ENCODE measurements at regions of chr1 and their contacts with region 1.

Region 1: GRCh38 chr1:32521165-32521564 is 18.1 kb upstream of the ZBTB8A start:
- DNase-seq: no peak
- H3K4me3 Mint-ChIP-seq: peak overlapping the region; percentile 61
- H3K27ac Mint-ChIP-seq: no peak overlapping the region
- H3K4me1 Mint-ChIP-seq: peaks cover 9% of the 10 kb centered on the region
- H3K27me3 Mint-ChIP-seq: no peaks in the 10 kb centered on the region

Region 2: GRCh38 chr1:31605908-31606427 is 915.2 kb before region 1 on chr1:
- intact Hi-C with region 1: no loop called
- DNase-seq: no peak
- H3K4me3 Mint-ChIP-seq: no peak overlapping the region
- H3K27ac Mint-ChIP-seq: no peak overlapping the region
- H3K4me1 Mint-ChIP-seq: peaks cover 9% of the 10 kb centered on the region
- H3K27me3 Mint-ChIP-seq: peaks cover 21% of the 10 kb centered on the region

Region 3: DNA sequence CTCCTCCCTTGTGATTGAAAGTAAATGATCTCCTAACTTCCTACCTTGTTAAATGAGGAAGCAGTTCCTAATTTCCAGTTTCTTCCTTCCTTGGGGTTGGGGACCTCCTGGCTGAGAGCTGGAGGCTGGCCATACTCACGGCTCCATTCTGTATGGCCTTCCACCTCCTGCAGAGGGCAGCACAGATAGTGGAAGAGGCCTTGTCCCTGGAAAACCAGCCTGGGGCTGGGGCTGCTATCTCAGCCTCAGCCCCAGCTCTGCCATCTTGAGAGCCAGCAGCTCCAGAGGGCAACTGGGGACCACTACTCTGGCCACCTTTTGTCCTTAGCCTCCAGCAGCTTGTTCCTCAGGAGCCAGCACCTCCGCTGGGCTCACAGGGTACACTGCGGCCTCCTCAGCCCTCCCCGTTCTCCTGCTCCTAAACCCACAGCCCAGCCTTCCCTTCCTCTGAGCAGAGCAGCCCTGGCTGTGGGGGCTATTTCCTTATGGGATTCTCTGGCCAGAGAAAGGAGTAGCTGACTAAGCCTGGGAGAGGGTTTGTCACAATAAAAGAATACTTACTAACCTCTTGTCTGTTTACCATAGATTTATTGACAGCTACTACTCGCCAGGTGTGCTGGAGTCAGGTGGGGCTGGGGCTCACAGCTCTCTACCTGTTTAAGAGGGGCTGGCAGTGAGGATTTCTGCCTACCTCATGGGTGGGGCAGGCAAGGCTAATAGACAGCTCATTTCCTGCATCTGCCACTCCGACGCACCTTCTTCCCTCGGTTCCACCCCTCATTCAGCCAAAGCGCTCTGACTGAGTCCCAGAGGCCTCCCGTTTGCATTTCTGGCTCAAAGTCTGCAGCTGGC is 305.3 kb before region 1 on chr1:
- intact Hi-C with region 1: no loop called
- DNase-seq: peak; percentile 53
- H3K4me3 Mint-ChIP-seq: no peak overlapping the region
- H3K27ac Mint-ChIP-seq: peak overlapping the region; percentile 28
- H3K4me1 Mint-ChIP-seq: peaks cover 13% of the 10 kb centered on the region
- H3K27me3 Mint-ChIP-seq: no peaks in the 10 kb centered on the region

Region 4: GRCh38 chr1:32612189-32612881 is 91.2 kb after region 1 on chr1:
- intact Hi-C with region 1: loop called (anchors 10 kb)
- DNase-seq: peak; percentile 40
- H3K4me3 Mint-ChIP-seq: peak overlapping the region; percentile 67
- H3K27ac Mint-ChIP-seq: no peak overlapping the region
- H3K4me1 Mint-ChIP-seq: peaks cover 2% of the 10 kb centered on the region
- H3K27me3 Mint-ChIP-seq: no peaks in the 10 kb centered on the region

Region 5: DNA sequence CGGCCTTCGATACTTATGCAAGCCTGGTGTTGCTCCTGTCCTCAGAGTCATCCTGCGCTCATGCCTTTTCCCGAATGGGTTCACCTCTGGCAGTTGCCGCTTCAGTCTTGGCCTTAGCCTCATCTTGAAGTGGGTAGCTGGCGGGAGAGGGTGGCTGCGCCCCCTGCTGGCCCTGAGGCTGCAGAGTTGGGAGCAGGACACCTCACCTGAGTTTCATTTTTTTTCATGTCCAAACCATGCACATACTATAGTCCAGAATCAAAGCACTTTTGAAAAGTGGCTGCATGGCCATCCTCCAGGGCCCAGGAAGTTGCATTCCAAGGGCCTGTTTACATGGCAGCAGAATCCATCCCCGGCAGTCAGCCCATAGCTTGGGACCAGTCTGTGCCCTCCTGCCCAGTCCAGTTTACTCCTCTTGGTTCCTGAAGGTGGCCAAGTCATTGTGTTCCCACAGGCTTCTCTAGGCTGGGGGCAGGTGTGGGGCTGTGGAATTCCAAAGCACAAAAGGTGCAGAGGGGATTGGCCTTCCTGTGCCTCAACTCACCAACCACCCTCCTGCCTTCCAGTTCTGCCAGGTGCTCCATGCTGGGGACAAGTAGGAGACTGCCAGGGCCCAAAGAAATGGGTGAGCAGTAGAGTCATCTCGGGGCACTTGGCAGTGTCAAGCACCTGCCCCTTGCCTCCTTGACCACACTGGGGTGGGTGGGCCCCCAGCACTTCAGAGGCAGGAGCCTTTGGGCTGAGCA is 252.0 kb after region 1 on chr1:
- intact Hi-C with region 1: loop called (anchors 10 kb)
- DNase-seq: peak; percentile 63
- H3K4me3 Mint-ChIP-seq: no peak overlapping the region
- H3K27ac Mint-ChIP-seq: no peak overlapping the region
- H3K4me1 Mint-ChIP-seq: peaks cover 5% of the 10 kb centered on the region
- H3K27me3 Mint-ChIP-seq: no peaks in the 10 kb centered on the region

Measured in activated T-helper 2 cell treated with anti-CD3 and anti-CD28 coated beads, Interferon-gamma antibody, Interleukin-2, Interleukin-4, amounts not matched to agents 10 μg/mL and 5 μg/mL and 100 μg/mL, durations not matched to agents 14 hours and 24 hours and 36 hours (primary cell).